A673 (cell line): ENCODE measurements at regions of chr3 and their contacts with region 1.

Region 1: GRCh38 chr3:47664519-47664918 is 85.9 kb upstream of the CSPG5 start:
- DNase-seq: peak; percentile 68
- H3K4me3 ChIP-seq: no peak overlapping the region
- H3K27ac ChIP-seq: peak overlapping the region; percentile 100
- H3K4me1 ChIP-seq: peaks cover 56% of the 10 kb centered on the region
- H3K27me3 ChIP-seq: no peaks in the 10 kb centered on the region
- CTCF ChIP-seq: peak; percentile 31

Region 2: GRCh38 chr3:47522082-47522987 is 142.2 kb before region 1 on chr3:
- CTCF ChIA-PET with region 1: no interaction called
- POLR2A ChIA-PET with region 1: interaction called, 9 read pairs
- intact Hi-C with region 1: loop called (anchors 5 kb)
- DNase-seq: peak; percentile 86
- H3K4me3 ChIP-seq: no peak overlapping the region
- H3K27ac ChIP-seq: peak overlapping the region; percentile 50
- H3K4me1 ChIP-seq: no peaks in the 10 kb centered on the region
- H3K27me3 ChIP-seq: no peaks in the 10 kb centered on the region
- CTCF ChIP-seq: peak; percentile 68

Region 3: GRCh38 chr3:47536221-47536891 is 128.2 kb before region 1 on chr3:
- CTCF ChIA-PET with region 1: no interaction called
- POLR2A ChIA-PET with region 1: no interaction called
- intact Hi-C with region 1: loop called (anchors 5 kb)
- DNase-seq: no peak
- H3K4me3 ChIP-seq: no peak overlapping the region
- H3K27ac ChIP-seq: peak overlapping the region; percentile 61
- H3K4me1 ChIP-seq: no peaks in the 10 kb centered on the region
- H3K27me3 ChIP-seq: no peaks in the 10 kb centered on the region
- CTCF ChIP-seq: no peak

Region 4: GRCh38 chr3:47553407-47553806 is 111.1 kb before region 1 on chr3:
- CTCF ChIA-PET with region 1: no interaction called
- POLR2A ChIA-PET with region 1: interaction called, 18 read pairs
- intact Hi-C with region 1: no loop called
- DNase-seq: no peak
- H3K4me3 ChIP-seq: no peak overlapping the region
- H3K27ac ChIP-seq: no peak overlapping the region
- H3K4me1 ChIP-seq: no peaks in the 10 kb centered on the region
- H3K27me3 ChIP-seq: no peaks in the 10 kb centered on the region
- CTCF ChIP-seq: no peak

Region 5: DNA sequence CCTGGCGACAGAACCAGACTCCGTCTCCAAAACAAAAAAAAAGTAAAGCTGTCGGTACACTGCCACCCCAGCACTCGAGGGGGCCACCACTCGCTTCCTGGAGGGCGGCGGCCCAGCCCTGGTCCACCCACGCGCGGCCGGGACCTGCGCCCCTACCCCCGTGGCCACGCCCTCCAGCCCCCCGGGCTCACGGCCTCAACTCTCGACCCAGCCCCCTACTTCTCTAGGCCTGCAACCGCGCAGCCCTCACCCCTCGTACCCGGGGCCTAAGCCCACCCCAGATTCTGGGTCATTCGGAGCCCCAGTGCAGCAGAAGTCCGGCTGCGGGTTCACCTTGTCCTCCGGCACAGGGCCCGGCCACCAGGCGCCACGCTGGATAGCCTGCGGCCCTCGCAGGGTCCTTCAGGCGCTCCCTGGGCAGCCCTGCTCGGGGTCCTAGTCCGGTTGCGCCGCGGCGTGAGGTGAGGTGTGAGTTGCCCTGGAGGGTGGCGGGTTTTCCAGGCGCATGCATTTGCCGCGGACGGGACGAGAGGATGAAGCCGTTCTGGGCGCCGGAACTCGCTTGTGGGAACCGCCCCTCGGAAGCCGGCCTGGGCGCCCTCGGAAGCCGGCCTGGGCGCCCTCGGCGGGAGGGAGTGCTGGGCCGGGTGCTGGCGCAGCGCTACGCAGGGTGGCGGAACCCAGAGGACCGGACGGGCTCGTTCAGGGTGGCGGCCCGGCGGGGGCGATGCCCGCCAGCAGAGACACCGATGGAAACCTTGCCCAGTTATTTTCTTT is 636.7 kb after region 1 on chr3:
- CTCF ChIA-PET with region 1: no interaction called
- POLR2A ChIA-PET with region 1: no interaction called
- intact Hi-C with region 1: no loop called
- DNase-seq: peak; percentile 82
- H3K4me3 ChIP-seq: peak within 1 kb of the TSS; percentile 72
- H3K27ac ChIP-seq: peak within 1 kb of the TSS; percentile 94
- H3K4me1 ChIP-seq: no peaks in the 10 kb centered on the region
- H3K27me3 ChIP-seq: no peaks in the 10 kb centered on the region
- CTCF ChIP-seq: no peak